ENCODE measurements at regions of chr19 and their contacts with region 1.

Region 1: GRCh38 chr19:9140159-9140874 is at the start of gene ZNF317:
- DNase-seq: peak; percentile 81 to 96 (median 85)
- ATAC-seq: peak; percentile 90
- H3K4me3 ChIP-seq: peak within 1 kb of the TSS; percentile 94
- H3K4me3 Mint-ChIP-seq: peak within 1 kb of the TSS; percentile 96
- H3K27ac ChIP-seq: peak within 1 kb of the TSS; percentile 86 to 87
- H3K27ac Mint-ChIP-seq: peak within 1 kb of the TSS; percentile 94
- H3K4me1 ChIP-seq: peaks cover 22% of the 10 kb centered on the region
- H3K4me1 Mint-ChIP-seq: peaks cover 48% of the 10 kb centered on the region
- H3K27me3 ChIP-seq: no peaks in the 10 kb centered on the region
- H3K27me3 Mint-ChIP-seq: peaks cover 5% of the 10 kb centered on the region
- CTCF ChIP-seq: no peak
- total RNA-seq, gene ZNF317: 110 TPM

Region 2: DNA sequence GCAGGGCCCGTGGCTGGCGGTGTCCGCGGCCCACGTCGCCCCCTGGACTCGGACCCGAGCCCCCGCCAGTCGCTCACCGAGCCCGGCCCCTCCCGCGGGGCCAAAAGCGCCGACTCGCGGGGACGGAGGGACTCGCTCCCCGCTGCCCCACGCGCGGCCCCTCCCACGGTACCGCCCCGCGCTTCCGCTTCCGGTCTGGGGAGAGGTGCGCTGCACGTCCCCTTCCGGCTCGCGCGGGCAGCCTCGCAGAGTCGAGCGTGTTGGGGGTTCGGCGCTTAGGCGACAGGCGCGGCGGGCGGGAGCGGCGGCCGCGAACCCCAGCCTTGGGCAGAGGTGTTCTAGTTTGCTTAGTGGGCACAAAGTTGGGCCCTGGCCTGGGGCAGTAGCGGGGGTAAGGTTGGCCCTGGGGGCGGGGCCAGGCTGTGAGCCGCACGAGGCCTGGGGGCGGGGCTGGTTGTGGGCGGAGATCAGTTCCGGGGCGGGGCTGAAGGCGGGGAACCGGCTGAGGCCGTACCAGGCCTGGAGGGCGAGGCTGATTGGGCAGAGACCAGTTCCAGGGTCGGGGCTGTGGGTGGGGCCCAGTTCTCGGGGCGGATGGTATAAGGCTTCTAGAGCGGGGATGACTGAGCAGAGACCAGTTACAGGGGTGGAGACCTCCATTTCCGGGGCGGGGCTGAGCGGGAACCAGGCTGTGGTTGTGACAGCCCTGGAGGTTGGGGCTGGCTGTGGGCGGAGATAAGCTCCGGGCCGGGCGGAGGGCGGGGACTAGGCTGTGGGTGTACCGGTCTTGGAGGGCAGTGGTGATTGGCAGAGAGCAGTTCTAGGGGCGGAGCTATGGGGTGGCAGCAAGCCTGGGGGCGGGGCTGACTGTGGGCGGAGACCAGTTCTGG is 307.9 kb before region 1 on chr19 and contains the starts of genes MBD3L1 and ZNF558:
- CTCF ChIA-PET with region 1: no interaction called
- POLR2A ChIA-PET with region 1: no interaction called
- intact Hi-C with region 1: loop called in 1 of 2 experiments (anchors 10 kb)
- DNase-seq: peak; percentile 95 to 100 (median 99)
- ATAC-seq: peak; percentile 88
- H3K4me3 ChIP-seq: peak within 1 kb of the TSS; percentile 90
- H3K4me3 Mint-ChIP-seq: peak within 1 kb of the TSS; percentile 97
- H3K27ac ChIP-seq: peak within 1 kb of the TSS; percentile 89 to 92
- H3K27ac Mint-ChIP-seq: peak within 1 kb of the TSS; percentile 95
- H3K4me1 ChIP-seq: peaks cover 15% of the 10 kb centered on the region
- H3K4me1 Mint-ChIP-seq: peaks cover 31% of the 10 kb centered on the region
- H3K27me3 ChIP-seq: no peaks in the 10 kb centered on the region
- H3K27me3 Mint-ChIP-seq: no peaks in the 10 kb centered on the region
- CTCF ChIP-seq: peak; percentile 48
- total RNA-seq, gene MBD3L1: not detected
- total RNA-seq, gene ZNF558: 22.2 to 23.3 TPM

Region 3: GRCh38 chr19:8922591-8922990 is 217.7 kb before region 1 on chr19:
- CTCF ChIA-PET with region 1: no interaction called
- POLR2A ChIA-PET with region 1: no interaction called
- intact Hi-C with region 1: no loop called
- DNase-seq: peak in 1 of 14 experiments; percentile 15
- ATAC-seq: no peak
- H3K4me3 ChIP-seq: no peak overlapping the region
- H3K4me3 Mint-ChIP-seq: no peak overlapping the region
- H3K27ac ChIP-seq: no peak overlapping the region
- H3K27ac Mint-ChIP-seq: no peak overlapping the region
- H3K4me1 ChIP-seq: no peaks in the 10 kb centered on the region
- H3K4me1 Mint-ChIP-seq: no peaks in the 10 kb centered on the region
- H3K27me3 ChIP-seq: no peaks in the 10 kb centered on the region
- H3K27me3 Mint-ChIP-seq: peaks cover 9% of the 10 kb centered on the region
- CTCF ChIP-seq: no peak

Region 4: GRCh38 chr19:9107375-9107774 is 32.9 kb before region 1 on chr19 and contains the start of gene OR7G2:
- CTCF ChIA-PET with region 1: no interaction called
- POLR2A ChIA-PET with region 1: no interaction called
- intact Hi-C with region 1: no loop called
- DNase-seq: no peak
- ATAC-seq: no peak
- H3K4me3 ChIP-seq: no peak within 1 kb of the TSS
- H3K4me3 Mint-ChIP-seq: no peak within 1 kb of the TSS
- H3K27ac ChIP-seq: no peak within 1 kb of the TSS
- H3K27ac Mint-ChIP-seq: no peak within 1 kb of the TSS
- H3K4me1 ChIP-seq: no peaks in the 10 kb centered on the region
- H3K4me1 Mint-ChIP-seq: no peaks in the 10 kb centered on the region
- H3K27me3 ChIP-seq: peaks cover 2 to 4% of the 10 kb centered on the region in 2 experiments
- H3K27me3 Mint-ChIP-seq: peaks cover 36% of the 10 kb centered on the region
- CTCF ChIP-seq: no peak
- total RNA-seq, gene OR7G2: not detected

Region 5: DNA sequence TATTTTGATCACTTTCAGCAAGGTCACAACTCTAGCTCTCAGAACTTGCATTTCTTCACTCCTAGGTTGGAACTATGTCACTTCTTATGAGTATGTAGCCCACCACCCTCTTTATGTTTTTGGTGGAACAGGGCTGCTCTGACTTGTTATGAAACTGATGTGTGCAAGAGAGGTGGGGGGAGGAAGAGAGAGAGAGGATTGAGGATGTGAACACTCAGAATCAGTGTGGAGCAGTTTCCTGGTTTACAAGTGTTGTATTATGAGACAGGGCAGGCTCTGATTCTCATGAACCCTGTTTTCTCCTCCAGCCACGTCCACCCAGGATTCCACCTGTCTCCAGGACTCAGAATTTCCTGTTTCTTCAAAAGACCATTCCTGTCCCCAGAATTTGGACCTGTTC is 16.0 kb after region 1 on chr19:
- CTCF ChIA-PET with region 1: no interaction called
- POLR2A ChIA-PET with region 1: no interaction called
- intact Hi-C with region 1: no loop called
- DNase-seq: no peak
- ATAC-seq: no peak
- H3K4me3 ChIP-seq: no peak overlapping the region
- H3K4me3 Mint-ChIP-seq: no peak overlapping the region
- H3K27ac ChIP-seq: no peak overlapping the region
- H3K27ac Mint-ChIP-seq: no peak overlapping the region
- H3K4me1 ChIP-seq: peaks cover 3% of the 10 kb centered on the region
- H3K4me1 Mint-ChIP-seq: peaks cover 31% of the 10 kb centered on the region
- H3K27me3 ChIP-seq: no peaks in the 10 kb centered on the region
- H3K27me3 Mint-ChIP-seq: no peaks in the 10 kb centered on the region
- CTCF ChIP-seq: no peak

Region 6: GRCh38 chr19:9309139-9309973 is 169.0 kb after region 1 on chr19 and contains the start of gene ZNF699:
- CTCF ChIA-PET with region 1: no interaction called
- POLR2A ChIA-PET with region 1: no interaction called
- intact Hi-C with region 1: loop called in 1 of 2 experiments (anchors 5 kb)
- DNase-seq: peak; percentile 95 to 99 (median 98)
- ATAC-seq: peak; percentile 94
- H3K4me3 ChIP-seq: peak within 1 kb of the TSS; percentile 94
- H3K4me3 Mint-ChIP-seq: peak within 1 kb of the TSS; percentile 95
- H3K27ac ChIP-seq: peak within 1 kb of the TSS; percentile 74 to 87
- H3K27ac Mint-ChIP-seq: peak within 1 kb of the TSS; percentile 94
- H3K4me1 ChIP-seq: peaks cover 27% of the 10 kb centered on the region
- H3K4me1 Mint-ChIP-seq: peaks cover 34% of the 10 kb centered on the region
- H3K27me3 ChIP-seq: no peaks in the 10 kb centered on the region
- H3K27me3 Mint-ChIP-seq: no peaks in the 10 kb centered on the region
- CTCF ChIP-seq: no peak
- total RNA-seq, gene ZNF699: 13.4 to 14.2 TPM

Region 7: GRCh38 chr19:9584073-9584833 is 443.9 kb after region 1 on chr19 and contains the start of gene ZNF121:
- CTCF ChIA-PET with region 1: no interaction called
- POLR2A ChIA-PET with region 1: no interaction called
- intact Hi-C with region 1: loop called in 1 of 2 experiments (anchors 2 kb)
- DNase-seq: peak; percentile 53 to 88 (median 68)
- ATAC-seq: peak; percentile 70
- H3K4me3 ChIP-seq: peak within 1 kb of the TSS; percentile 82
- H3K4me3 Mint-ChIP-seq: peak within 1 kb of the TSS; percentile 98
- H3K27ac ChIP-seq: peak within 1 kb of the TSS; percentile 92 to 93
- H3K27ac Mint-ChIP-seq: peak within 1 kb of the TSS; percentile 98
- H3K4me1 ChIP-seq: peaks cover 23% of the 10 kb centered on the region
- H3K4me1 Mint-ChIP-seq: peaks cover 36% of the 10 kb centered on the region
- H3K27me3 ChIP-seq: no peaks in the 10 kb centered on the region
- H3K27me3 Mint-ChIP-seq: peaks cover 5% of the 10 kb centered on the region
- CTCF ChIP-seq: no peak
- total RNA-seq, gene ZNF121: 42.0 to 42.1 TPM

Region 8: GRCh38 chr19:9914315-9915207 is 774.2 kb after region 1 on chr19:
- CTCF ChIA-PET with region 1: no interaction called
- POLR2A ChIA-PET with region 1: no interaction called
- intact Hi-C with region 1: loop called (anchors 5 kb)
- DNase-seq: peak; percentile 65 to 91 (median 80)
- ATAC-seq: peak; percentile 90
- H3K4me3 ChIP-seq: peak overlapping the region; percentile 45
- H3K4me3 Mint-ChIP-seq: peak overlapping the region; percentile 78
- H3K27ac ChIP-seq: no peak overlapping the region
- H3K27ac Mint-ChIP-seq: no peak overlapping the region
- H3K4me1 ChIP-seq: peaks cover 17% of the 10 kb centered on the region
- H3K4me1 Mint-ChIP-seq: peaks cover 7% of the 10 kb centered on the region
- H3K27me3 ChIP-seq: peaks cover 16 to 32% of the 10 kb centered on the region in 2 experiments
- H3K27me3 Mint-ChIP-seq: peaks cover 36% of the 10 kb centered on the region
- CTCF ChIP-seq: peak; percentile 63